GM10248 (cell line): ENCODE measurements at regions of chr4 and their contacts with region 1.

Region 1: DNA sequence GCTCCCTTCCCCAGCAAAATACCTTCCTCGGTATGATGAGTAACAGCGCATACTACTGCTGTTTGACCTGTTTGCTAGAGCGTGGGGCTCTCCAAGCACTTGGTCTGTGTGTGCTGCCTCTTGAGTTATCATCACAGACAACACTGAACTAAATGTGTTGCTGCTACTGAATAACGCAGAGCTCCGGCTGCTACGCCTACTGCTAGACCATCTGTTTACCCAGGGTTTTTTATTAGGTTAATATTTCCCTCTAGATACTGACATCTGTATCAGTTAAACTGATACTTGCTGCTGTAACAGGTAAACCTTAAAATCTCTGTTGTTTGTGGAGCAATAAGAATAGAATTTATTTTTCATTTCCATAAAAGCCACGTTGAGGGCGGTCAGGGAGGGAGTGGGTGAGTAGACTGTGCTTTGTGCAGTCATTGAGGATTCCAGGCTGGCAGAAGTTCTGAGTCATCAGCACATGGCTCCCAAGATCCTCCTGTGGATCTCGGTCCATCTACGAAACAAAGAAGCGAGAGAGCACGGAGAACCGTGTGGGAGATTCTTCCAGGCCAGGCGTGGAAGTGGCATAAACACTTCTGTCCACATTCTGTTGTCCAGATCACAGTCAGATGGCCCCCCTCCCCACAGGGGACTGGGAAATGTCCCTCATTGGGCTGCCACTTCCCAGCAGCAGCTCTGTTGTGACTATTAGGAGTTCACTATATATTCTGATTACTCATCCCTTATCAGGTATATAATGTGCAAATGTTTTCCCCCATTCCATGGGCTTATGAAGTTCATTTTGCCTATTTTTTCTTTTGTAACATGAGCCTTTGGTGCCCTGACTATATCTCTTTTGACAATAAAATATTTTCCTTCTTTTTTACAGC is 14.1 kb downstream of the GRK4 start:
- DNase-seq: no peak
- CTCF ChIP-seq: no peak

Region 2: DNA sequence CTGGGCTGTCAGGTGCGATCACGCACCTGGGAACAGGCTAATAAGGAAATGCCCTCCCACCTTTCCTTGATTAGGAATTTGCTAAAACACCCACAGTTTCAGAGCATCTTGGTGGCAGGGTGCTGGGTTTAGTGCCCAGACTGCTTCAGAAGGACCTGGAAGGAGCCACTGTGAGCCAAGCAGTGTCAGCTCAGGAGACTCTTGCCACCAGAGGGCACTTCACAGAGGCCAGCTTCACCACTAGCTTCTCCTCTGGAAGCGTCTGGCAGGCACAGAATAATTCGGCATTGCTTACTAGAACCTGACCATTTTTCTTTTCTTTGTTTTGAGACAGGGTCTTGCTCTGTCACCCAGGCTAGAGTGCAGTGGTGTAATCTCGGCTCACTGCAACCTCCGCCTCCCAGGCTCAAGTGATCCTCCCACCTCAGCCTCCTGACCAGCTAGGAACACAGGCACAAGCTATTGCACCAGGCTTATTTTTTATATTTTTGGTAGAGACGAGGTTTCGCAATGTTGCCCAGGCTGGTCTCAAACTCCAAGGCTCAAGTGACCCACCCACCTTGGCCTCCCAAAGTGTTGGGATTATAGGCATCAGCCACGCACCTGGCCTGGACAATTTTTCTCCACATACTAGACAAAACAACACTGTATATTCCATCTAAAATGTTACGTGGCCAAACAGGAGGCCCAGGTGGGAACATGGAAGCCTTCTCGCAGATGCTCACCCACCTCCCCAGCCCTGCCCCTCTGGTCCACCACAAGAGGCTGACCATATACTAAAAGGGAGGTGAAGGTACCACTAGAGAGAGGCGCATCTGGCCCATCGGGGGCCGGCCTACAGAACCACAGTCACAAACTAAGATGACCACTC is 28.3 kb before region 1 on chr4:
- CTCF ChIA-PET with region 1: interaction called, 12 read pairs
- POLR2A ChIA-PET with region 1: no interaction called
- DNase-seq: no peak
- CTCF ChIP-seq: peak; percentile 42

Region 3: GRCh38 chr4:2963175-2963965 is 14.1 kb before region 1 on chr4 and contains the starts of genes GRK4 and NOP14:
- CTCF ChIA-PET with region 1: interaction called, 84 read pairs
- POLR2A ChIA-PET with region 1: no interaction called
- DNase-seq: peak; percentile 98
- CTCF ChIP-seq: peak; percentile 12

Region 4: DNA sequence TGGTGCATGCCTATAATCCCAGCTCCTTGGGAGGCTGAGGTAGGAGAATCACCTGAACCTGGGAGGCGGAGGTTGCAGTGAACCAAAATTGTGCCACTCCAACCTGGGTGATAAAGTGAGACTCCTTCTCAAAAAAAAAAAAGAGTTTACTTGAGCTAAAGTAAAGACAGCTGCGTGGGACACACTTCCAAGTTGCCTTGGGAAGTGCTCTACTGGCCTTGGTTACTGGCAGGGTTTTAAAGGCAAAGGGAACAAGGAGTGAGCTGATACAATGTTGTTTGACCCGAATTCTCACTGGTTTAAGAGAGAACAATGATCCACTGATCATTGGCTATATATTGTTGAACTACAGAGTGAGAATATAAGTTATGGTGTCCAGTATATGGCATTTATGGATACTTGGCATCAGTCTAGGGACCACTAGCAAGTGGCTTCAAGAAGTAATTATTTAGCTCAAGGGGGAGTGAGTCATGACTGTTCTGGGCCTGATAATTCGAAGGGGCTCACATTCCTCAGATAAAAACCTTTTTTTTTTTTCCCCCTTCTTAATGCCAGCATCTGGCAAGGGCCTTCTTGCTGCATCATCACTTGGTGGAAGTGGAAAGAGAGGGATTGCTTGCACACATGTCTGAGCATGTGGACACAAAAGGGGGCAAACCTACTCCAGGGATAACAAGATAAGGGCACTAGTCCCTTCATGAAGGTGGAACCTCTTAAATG is 18.3 kb after region 1 on chr4:
- CTCF ChIA-PET with region 1: interaction called, 95 read pairs
- POLR2A ChIA-PET with region 1: no interaction called
- DNase-seq: no peak
- CTCF ChIP-seq: no peak

Region 5: DNA sequence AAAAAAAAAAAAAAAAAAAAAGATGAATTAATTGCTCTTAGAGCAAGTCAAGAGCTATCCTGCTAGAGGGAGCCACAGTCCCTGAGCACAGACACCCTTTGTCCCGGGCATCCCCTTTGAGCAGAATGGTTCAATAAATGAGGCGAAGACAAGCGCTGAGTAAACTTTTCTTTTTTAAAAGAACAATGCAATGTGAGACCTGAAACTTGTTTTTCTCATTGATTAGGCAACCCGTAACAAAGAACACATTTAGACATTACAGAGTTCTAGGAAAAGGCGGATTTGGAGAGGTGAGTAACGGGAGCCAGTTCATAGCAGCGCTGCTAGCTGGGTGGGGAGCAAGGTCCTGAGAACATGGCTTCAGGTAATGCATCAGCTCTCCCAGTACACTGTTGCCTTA is 32.0 kb after region 1 on chr4:
- CTCF ChIA-PET with region 1: interaction called, 12 read pairs
- POLR2A ChIA-PET with region 1: no interaction called
- DNase-seq: peak; percentile 61
- CTCF ChIP-seq: peak; percentile 38

Region 6: DNA sequence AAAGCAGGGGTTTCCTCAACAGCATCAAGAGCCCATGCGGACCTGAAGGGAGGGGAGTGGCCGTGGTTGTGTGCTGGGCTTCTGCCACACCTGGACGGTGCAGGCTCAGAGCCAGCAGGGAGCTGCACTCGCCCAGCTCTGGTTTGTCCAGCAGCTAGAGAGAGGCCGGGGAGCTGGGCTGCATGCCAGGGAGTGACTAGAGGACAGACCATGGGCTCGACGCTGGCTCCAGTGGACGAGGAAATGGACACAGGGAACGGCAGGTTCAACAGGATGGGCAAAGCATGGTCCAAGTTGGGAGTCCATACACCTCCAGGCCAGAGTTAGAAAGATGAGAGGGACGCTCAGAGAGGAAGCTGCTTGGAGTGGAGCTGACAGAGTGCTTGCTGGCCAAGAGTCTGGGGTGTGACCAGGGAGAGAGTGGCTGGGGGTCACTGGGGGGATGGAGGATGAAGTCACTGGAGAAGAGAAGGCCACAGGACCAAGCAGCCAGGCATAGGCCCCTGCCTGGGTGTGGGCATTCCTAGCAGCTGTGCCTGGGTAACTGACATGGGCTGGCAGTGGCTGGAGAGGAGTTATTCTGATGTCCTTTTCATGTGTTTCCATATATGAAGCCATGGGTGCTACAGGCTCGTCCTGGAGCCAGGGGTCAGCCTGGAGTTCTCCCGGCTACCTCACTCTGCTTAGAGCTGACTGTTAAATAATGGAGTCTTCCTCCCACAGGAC is 54.1 kb after region 1 on chr4:
- CTCF ChIA-PET with region 1: interaction called, 39 read pairs
- POLR2A ChIA-PET with region 1: no interaction called
- DNase-seq: no peak
- CTCF ChIP-seq: no peak

Region 7: DNA sequence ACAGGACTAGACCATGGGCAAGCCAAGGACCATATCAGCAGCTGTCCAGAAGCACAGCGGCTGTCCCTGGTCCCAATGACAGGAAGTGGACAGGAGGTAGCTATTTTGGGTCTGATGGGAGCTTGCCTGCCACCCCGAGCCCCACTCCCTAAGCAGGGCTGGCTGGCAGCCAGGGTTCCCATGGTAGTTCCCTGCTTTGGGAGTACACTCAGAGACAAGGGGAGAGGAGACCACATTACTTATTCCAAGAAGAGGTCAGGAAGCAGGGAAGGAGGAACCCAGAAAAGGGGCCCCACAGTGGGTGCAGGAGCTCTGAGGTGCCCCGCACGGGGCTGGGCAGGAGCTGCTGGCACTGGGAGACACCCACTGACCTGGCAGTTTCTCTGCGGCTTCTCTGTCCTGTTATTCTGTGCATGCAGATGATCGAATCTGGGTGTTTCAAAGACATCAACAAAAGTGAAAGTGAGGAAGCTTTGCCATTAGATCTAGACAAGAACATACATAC is 60.6 kb after region 1 on chr4:
- CTCF ChIA-PET with region 1: interaction called, 39 read pairs
- POLR2A ChIA-PET with region 1: no interaction called
- DNase-seq: peak; percentile 36
- CTCF ChIP-seq: no peak